Activated CD4-positive, alpha-beta memory T cell treated with anti-CD3 and anti-CD28 coated beads, Interleukin-2, amount 10 ng/mL, durations not matched to agents 7 days and 5 days (primary cell): ENCODE measurements at regions of chr1 and their contacts with region 1.

Region 1: DNA sequence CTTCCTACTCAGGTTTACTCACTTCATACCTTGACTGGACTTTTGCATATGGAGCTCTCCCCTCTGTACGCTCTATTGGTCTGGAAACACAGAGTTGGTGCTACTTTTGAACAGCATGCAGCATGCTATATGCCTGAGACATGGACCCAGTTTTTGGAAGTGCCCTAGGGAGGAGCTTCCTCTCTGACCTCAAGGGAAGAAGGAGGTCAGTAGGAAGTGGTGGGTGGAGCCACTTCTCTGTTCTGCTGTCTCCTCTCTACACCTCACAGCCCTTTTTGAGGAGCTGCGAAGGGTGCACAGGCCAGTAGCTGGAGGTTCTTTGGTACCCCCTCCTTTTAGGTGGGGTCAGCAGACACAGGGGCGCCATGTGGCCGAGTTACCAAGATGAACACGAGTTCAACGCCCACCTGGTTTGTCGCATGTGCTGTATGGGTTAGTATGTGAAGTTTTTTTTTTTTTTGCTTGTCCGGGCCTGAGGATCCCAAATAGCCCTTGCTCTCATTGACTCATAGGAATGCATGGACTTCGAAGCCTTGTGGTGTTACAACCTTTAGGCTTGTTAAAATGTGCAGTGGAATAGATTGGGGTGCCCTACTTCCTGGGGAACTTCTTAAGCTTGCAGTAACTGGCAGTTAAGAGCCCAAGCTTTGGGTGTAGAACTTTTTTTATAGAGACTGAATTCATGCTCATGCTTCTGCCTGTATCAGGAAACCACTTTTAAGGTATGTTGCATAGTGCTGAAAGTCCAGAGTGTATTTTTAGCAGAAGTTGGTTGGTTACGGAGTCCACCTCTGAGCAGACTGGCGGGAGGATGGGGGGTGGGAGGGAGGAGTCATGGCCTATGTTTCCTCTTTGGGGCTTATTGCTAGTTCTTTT is 10.7 kb downstream of the MACF1 start:
- DNase-seq: peak; percentile 51
- H3K4me3 Mint-ChIP-seq: peak overlapping the region; percentile 93
- H3K27ac Mint-ChIP-seq: peak overlapping the region; percentile 85
- H3K4me1 Mint-ChIP-seq: peaks cover 58% of the 10 kb centered on the region
- H3K27me3 Mint-ChIP-seq: no peaks in the 10 kb centered on the region

Region 2: GRCh38 chr1:39183503-39184353 is 31.5 kb before region 1 on chr1:
- CTCF ChIA-PET with region 1: interaction called, 150 read pairs
- POLR2A ChIA-PET with region 1: interaction called, 155 read pairs
- DNase-seq: peak; percentile 84
- H3K4me3 Mint-ChIP-seq: no peak overlapping the region
- H3K27ac Mint-ChIP-seq: peak overlapping the region; percentile 88
- H3K4me1 Mint-ChIP-seq: peaks cover 50% of the 10 kb centered on the region
- H3K27me3 Mint-ChIP-seq: no peaks in the 10 kb centered on the region

Region 3: GRCh38 chr1:39230261-39231190 is 15.3 kb after region 1 on chr1:
- CTCF ChIA-PET with region 1: interaction called, 3 read pairs
- POLR2A ChIA-PET with region 1: interaction called, 10 read pairs
- DNase-seq: peak; percentile 31
- H3K4me3 Mint-ChIP-seq: no peak overlapping the region
- H3K27ac Mint-ChIP-seq: peak overlapping the region; percentile 66
- H3K4me1 Mint-ChIP-seq: peaks cover 49% of the 10 kb centered on the region
- H3K27me3 Mint-ChIP-seq: no peaks in the 10 kb centered on the region

Region 4: DNA sequence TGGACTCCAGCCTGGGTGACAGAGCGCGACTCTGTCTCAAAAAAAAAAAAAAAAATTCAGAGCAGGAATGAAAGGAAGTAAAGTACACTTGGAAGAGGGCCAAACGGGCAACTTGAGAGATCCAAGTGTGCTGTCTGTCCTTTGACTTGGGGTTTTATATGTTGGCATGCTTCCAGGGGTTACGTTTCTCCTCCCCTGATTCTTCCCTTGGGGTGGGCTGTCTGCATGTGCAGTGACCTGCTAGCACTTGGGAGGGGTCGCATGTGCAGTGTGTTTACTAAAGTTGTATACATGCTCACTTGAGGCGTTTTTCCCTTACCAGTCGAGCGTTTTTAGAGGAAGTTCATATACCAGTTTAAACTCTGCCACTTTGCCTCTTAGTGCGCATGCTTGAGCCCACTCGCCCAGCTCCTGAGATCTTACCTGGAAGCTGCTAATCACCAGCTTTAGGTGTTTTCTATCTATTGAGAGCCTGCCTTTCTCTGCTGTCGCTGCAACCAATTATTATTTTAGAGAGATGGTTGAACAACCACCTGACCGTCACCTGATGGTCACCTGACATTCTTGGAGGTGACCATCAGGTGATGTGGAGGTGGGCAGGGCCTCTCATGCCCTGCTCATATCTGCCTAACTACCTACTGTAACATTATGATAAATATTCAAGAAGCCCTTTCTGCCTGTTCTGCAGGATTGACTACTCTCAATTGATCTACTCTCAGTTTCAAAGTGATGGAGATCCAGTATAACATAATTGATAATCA is 129.3 kb after region 1 on chr1:
- CTCF ChIA-PET with region 1: no interaction called
- POLR2A ChIA-PET with region 1: no interaction called
- DNase-seq: no peak
- H3K4me3 Mint-ChIP-seq: no peak overlapping the region
- H3K27ac Mint-ChIP-seq: no peak overlapping the region
- H3K4me1 Mint-ChIP-seq: no peaks in the 10 kb centered on the region
- H3K27me3 Mint-ChIP-seq: no peaks in the 10 kb centered on the region